Common myeloid progenitor, CD34-positive (primary cell): ENCODE measurements at regions of chr14 and their contacts with region 1.

Region 1: GRCh38 chr14:50830932-50831725 is at the start of gene NIN:
- DNase-seq: peak; percentile 78 to 89 (median 83)
- H3K4me3 ChIP-seq: peak within 1 kb of the TSS; percentile 64 to 97 (median 91)
- H3K27ac ChIP-seq: peak within 1 kb of the TSS; percentile 64 to 80
- H3K4me1 ChIP-seq: peaks cover 23 to 59% (median 37%) of the 10 kb centered on the region in 4 experiments
- H3K27me3 ChIP-seq: no peaks in the 10 kb centered on the region

Region 2: DNA sequence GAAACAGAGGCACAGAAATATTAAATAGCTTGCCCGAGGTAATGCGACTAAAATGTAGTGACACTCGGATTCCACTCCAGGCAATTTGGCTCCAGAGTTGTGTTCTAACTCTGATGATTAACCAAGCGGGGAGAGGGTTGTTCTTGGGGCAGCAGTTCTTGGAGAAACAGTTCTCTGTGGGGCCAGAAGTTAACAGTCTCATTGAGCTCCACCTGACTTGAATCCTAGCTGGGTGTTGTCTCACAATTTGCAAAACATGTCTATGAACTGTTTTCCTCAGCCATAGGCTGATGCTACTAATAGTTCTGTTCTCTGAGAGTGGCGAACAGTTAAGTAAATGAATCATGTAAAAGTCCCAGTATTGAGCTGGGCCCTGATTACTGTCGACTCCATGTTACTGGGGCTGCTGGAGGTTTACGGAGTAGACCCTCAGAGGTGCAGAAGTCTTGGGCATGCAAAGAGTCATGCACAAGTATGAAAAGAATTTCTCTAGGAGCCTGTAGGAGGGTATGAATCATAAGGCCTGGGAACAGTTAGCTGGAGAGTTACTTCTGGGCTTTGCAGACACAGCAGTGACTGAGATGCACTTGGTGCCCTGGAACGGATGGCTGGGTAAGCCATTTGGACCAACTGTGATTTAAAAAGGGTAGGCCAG is 15.2 kb after region 1 on chr14:
- CTCF ChIA-PET with region 1: interaction called, 12 read pairs
- POLR2A ChIA-PET with region 1: interaction called, 3 read pairs
- DNase-seq: no peak
- H3K4me3 ChIP-seq: no peak overlapping the region
- H3K27ac ChIP-seq: no peak overlapping the region
- H3K4me1 ChIP-seq: peaks cover 0 to 7% (median 0%) of the 10 kb centered on the region in 4 experiments
- H3K27me3 ChIP-seq: no peaks in the 10 kb centered on the region